CD4-positive, alpha-beta memory T cell (primary cell): ENCODE measurements at regions of chr2 and their contacts with region 1.

Region 1: DNA sequence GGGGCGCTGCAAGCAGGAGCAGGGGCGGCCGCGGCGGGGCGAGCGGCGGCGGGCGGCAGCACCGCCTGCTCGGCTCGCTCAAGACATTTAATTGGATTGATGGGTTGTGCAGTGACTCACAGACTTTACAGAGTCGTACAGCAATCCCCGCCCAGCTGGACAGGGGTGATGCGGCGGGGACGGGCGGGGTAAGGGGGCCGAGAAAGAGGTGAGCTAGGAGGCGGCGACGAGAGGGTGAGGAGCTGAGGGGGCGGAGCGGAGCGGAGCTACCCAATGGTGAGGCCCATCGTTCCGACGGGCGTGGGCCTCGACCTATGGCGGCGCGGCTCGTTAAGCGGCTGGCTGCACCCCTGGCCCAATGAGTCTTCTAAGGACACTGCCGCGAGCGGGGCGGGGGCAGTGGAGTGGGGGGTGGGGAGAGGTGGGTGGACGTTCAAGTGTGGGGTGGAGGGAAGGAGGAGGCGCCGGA is 97.1 kb upstream of the SERTAD2 start:
- DNase-seq: peak; percentile 96 to 99 (median 97)
- H3K4me3 ChIP-seq: peak overlapping the region; percentile 84 to 98
- H3K4me3 Mint-ChIP-seq: peak overlapping the region; percentile 98 to 99 (median 99)
- H3K27ac ChIP-seq: peak overlapping the region; percentile 93
- H3K27ac Mint-ChIP-seq: peak overlapping the region; percentile 91 to 98 (median 96)
- H3K4me1 ChIP-seq: peaks cover 20% of the 10 kb centered on the region
- H3K4me1 Mint-ChIP-seq: peaks cover 13 to 30% (median 23%) of the 10 kb centered on the region in 4 donors
- H3K27me3 ChIP-seq: no peaks in the 10 kb centered on the region
- H3K27me3 Mint-ChIP-seq: no peaks in the 10 kb centered on the region

Region 2: DNA sequence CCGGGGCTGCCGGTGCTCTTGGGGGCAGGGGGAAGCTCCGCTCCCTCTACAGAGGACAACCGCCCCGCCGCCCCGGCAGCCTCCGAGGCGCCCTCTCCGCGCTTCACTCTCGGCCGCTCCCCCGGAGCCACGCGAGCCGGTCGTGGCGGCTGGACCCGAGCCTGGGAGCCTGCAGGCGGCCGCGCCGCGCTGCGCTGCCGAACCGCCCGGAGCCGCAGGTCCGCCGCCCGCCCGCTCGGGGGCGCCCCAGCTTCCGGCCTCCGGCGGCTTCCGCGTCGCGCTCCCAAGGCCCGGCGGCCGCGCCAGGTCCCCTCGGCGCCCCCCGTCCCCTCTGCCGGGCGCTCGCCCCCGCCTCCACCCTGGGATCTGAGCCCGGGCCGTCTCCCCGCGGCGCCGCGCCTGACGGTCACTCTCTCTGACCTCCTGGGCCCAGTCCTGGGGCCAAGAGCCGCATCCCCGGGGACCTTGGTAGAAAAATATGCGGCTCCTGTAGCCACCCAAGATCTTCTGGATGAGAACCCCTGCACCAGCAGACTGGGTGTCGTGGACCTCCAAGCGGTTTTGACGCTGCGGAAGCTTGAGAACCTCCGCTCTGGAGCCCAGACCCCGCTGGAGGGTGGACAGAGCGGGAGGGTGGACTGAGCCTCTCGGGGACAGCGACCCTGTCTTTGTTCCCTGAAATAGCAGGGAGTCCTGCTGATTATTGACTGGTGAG is 141.5 kb before region 1 on chr2:
- CTCF ChIA-PET with region 1: interaction called, 8 read pairs
- POLR2A ChIA-PET with region 1: interaction called, 16 read pairs
- intact Hi-C with region 1: loop called (anchors 2 kb)
- DNase-seq: peak; percentile 58 to 79 (median 76)
- H3K4me3 ChIP-seq: peak overlapping the region in 1 of 2 donors; percentile 61
- H3K4me3 Mint-ChIP-seq: peak overlapping the region; percentile 64 to 79 (median 75)
- H3K27ac ChIP-seq: peak overlapping the region; percentile 57
- H3K27ac Mint-ChIP-seq: peak overlapping the region; percentile 35 to 83 (median 70)
- H3K4me1 ChIP-seq: peaks cover 38% of the 10 kb centered on the region
- H3K4me1 Mint-ChIP-seq: peaks cover 10 to 33% (median 22%) of the 10 kb centered on the region in 4 donors
- H3K27me3 ChIP-seq: no peaks in the 10 kb centered on the region
- H3K27me3 Mint-ChIP-seq: no peaks in the 10 kb centered on the region

Region 3: GRCh38 chr2:64661741-64662169 is 89.1 kb before region 1 on chr2:
- CTCF ChIA-PET with region 1: interaction called, 9 read pairs
- POLR2A ChIA-PET with region 1: interaction called, 46 read pairs
- intact Hi-C with region 1: no loop called
- DNase-seq: no peak
- H3K4me3 ChIP-seq: no peak overlapping the region
- H3K4me3 Mint-ChIP-seq: no peak overlapping the region
- H3K27ac ChIP-seq: no peak overlapping the region
- H3K27ac Mint-ChIP-seq: no peak overlapping the region
- H3K4me1 ChIP-seq: peaks cover 18% of the 10 kb centered on the region
- H3K4me1 Mint-ChIP-seq: peaks cover 15 to 39% (median 24%) of the 10 kb centered on the region in 4 donors
- H3K27me3 ChIP-seq: no peaks in the 10 kb centered on the region
- H3K27me3 Mint-ChIP-seq: no peaks in the 10 kb centered on the region

Region 4: GRCh38 chr2:64730551-64731262 is 20.1 kb before region 1 on chr2:
- CTCF ChIA-PET with region 1: interaction called, 12 read pairs
- POLR2A ChIA-PET with region 1: interaction called, 172 read pairs
- intact Hi-C with region 1: loop called (anchors 1 kb)
- DNase-seq: peak; percentile 44 to 75 (median 50)
- H3K4me3 ChIP-seq: peak overlapping the region; percentile 32 to 68
- H3K4me3 Mint-ChIP-seq: peak overlapping the region; percentile 83 to 94 (median 89)
- H3K27ac ChIP-seq: peak overlapping the region; percentile 72
- H3K27ac Mint-ChIP-seq: peak overlapping the region; percentile 95 to 98 (median 97)
- H3K4me1 ChIP-seq: peaks cover 42% of the 10 kb centered on the region
- H3K4me1 Mint-ChIP-seq: peaks cover 31 to 61% (median 43%) of the 10 kb centered on the region in 4 donors
- H3K27me3 ChIP-seq: no peaks in the 10 kb centered on the region
- H3K27me3 Mint-ChIP-seq: no peaks in the 10 kb centered on the region

Region 5: DNA sequence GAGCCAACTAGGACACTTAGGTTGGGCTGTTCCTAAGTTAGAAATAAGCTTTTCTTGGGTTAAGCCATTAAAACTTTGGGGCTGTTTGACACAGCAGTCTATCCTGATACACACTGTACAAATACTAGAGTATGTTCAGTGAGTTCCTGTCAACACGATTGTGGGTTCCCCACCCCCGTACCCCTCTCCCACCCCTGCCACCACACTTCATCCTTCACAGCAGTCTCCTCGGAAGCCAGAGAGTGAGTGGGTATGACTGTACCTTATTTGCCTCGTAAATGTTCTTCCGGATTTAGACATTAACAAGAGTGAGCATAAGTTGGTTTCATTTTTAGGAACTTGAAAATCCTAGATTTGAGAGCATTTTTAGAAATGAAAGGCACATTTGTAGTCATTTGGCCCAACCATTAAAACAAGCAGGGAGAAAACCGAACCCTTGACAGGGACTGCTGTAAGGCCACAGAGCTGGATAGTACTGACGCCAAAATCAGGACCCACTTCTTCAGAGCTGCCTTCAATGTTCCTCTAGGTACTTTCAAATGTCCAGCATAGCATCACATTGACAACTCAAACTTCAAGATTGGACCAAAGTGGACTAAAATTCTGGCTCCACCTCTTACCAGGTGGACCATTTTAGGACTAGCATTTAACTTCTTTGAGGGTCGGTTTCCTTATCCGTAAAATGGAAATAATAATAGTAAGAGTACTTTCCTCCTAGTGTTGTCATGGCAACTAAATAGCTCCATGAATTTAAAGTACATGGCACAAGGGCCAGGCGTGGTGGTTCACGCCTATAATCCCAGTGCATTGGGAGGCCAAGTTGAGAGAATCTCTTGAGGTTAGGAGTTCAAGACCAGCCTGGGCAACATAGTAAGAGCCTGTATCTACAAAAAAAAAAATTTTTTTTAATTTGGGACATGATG is 69.2 kb after region 1 on chr2:
- CTCF ChIA-PET with region 1: interaction called, 5 read pairs
- POLR2A ChIA-PET with region 1: interaction called, 24 read pairs
- intact Hi-C with region 1: loop called (anchors 2 kb)
- DNase-seq: peak; percentile 52 to 67 (median 64)
- H3K4me3 ChIP-seq: peak overlapping the region in 1 of 2 donors; percentile 29
- H3K4me3 Mint-ChIP-seq: peak overlapping the region; percentile 66 to 93 (median 80)
- H3K27ac ChIP-seq: peak overlapping the region; percentile 44
- H3K27ac Mint-ChIP-seq: peak overlapping the region; percentile 72 to 98 (median 92)
- H3K4me1 ChIP-seq: peaks cover 23% of the 10 kb centered on the region
- H3K4me1 Mint-ChIP-seq: peaks cover 15 to 34% (median 21%) of the 10 kb centered on the region in 4 donors
- H3K27me3 ChIP-seq: no peaks in the 10 kb centered on the region
- H3K27me3 Mint-ChIP-seq: peaks cover 0 to 2% of the 10 kb centered on the region in 2 donors

Region 6: GRCh38 chr2:65129826-65130663 is 379.2 kb after region 1 on chr2 and contains the start of gene RAB1A:
- CTCF ChIA-PET with region 1: no interaction called
- POLR2A ChIA-PET with region 1: interaction called, 5 read pairs
- intact Hi-C with region 1: loop called (anchors 2 kb)
- DNase-seq: peak; percentile 95 to 100 (median 99)
- H3K4me3 ChIP-seq: peak within 1 kb of the TSS; percentile 74 to 94
- H3K4me3 Mint-ChIP-seq: peak within 1 kb of the TSS; percentile 97 to 100 (median 99)
- H3K27ac ChIP-seq: peak within 1 kb of the TSS; percentile 97
- H3K27ac Mint-ChIP-seq: peak within 1 kb of the TSS; percentile 94 to 100 (median 99)
- H3K4me1 ChIP-seq: peaks cover 45% of the 10 kb centered on the region
- H3K4me1 Mint-ChIP-seq: peaks cover 20 to 51% (median 28%) of the 10 kb centered on the region in 4 donors
- H3K27me3 ChIP-seq: no peaks in the 10 kb centered on the region
- H3K27me3 Mint-ChIP-seq: no peaks in the 10 kb centered on the region
- total RNA-seq, gene RAB1A: 53.3 to 58.4 TPM